WTC11 (cell line): ENCODE measurements at regions of chr10 and their contacts with region 1.

Region 1: DNA sequence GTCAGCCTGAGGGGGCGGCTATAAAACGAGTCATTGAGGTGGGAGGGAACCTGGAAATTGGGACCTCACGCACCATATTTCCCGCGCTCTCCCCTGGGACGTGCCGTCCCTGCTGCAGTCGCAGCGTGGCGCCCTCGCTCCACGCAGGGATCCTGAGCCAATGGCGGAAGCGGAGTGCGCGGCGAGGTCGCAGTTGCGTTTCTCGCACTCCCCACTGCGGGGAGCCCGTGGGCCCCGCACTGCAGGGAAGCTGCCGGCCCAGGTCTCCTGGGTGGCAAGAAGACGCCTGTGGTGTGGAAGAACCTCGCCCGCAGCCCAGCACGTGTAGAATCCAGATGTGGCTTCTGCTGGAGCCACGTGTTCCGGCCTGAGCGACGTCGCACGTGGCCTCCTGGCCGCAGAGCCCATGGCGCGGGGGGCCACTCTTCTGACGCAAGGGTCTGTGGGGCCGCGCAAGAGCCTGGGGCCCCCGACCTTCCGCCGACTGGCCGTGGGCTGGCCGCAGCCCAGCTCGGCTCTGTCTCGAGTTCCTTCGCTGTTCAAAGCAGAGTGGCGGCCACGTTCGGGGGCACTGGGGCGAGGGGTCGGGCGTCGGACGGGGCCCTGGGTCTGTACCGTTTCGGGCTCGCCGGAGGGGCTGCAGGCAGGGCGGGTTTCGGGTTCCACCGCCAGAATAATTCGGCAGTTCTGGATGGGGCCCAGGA is 26.4 kb downstream of the HIF1AN start:
- DNase-seq: peak; percentile 73
- ATAC-seq: peak; percentile 64
- H3K4me3 Mint-ChIP-seq: no peak overlapping the region
- H3K27ac Mint-ChIP-seq: no peak overlapping the region
- H3K4me1 Mint-ChIP-seq: peaks cover 9% of the 10 kb centered on the region; the same call in 1 of the 2 replicates
- H3K27me3 Mint-ChIP-seq: peaks cover 51% of the 10 kb centered on the region
- CTCF ChIP-seq: peak; percentile 67; the same call in 1 of the 2 replicates

Region 2: DNA sequence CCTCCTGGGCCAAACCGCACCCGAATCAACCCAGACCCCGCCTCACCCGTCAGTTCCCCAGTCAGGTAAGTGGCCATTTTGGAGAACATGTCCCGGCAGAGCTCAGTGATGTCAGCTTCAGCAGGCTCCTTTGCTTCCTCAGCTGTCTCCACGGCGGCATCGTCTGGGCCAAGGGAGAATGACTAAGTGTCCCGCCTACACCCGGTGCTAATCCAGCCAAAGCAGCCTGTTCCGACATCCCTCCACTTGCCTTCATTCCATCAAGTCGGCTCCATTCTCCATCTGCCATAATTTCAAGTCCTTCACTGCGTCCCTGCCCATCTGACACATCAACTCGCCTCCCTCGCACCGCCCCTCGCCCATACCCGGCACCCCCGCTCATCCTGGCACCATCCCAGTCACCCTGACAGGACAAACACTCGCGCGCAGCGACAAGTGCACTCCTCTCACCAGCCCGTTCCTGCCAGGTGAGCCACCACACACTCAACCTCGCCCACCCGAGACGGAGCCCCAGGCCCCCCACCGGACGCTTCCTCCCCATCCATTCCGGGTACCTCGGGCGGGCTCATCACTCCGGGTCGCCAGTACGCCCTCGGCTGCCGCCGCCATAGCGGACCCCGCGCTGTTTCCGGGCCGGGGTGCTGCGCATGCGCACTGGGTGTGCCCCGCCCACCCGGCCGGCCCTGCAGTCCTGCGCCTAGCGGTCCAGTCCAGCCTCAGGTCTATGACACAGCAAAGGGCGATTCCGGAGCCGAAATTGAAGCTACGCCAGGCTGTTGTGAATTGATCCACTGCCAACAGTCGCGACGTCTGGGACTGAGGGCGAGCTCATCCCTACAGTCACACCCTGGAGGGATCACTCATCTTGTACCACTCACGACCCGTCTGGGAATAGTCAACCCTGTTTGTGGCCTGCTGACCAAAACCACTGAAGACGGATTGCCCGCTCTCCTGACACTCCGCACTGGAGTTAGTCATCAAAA is 275.8 kb before region 1 on chr10 and contains the start of gene BLOC1S2:
- CTCF ChIA-PET with region 1: no interaction called
- POLR2A ChIA-PET with region 1: no interaction called
- DNase-seq: peak; percentile 85
- ATAC-seq: peak; percentile 91
- H3K4me3 Mint-ChIP-seq: peak within 1 kb of the TSS; percentile 99
- H3K27ac Mint-ChIP-seq: peak within 1 kb of the TSS; percentile 94
- H3K4me1 Mint-ChIP-seq: peaks cover 17% of the 10 kb centered on the region
- H3K27me3 Mint-ChIP-seq: peaks cover 5% of the 10 kb centered on the region
- CTCF ChIP-seq: no peak
- total RNA-seq, gene BLOC1S2: 47.6 to 54.1 TPM (median 52.4 TPM) in 3 replicates

Region 3: GRCh38 chr10:100498059-100498458 is 64.1 kb before region 1 on chr10:
- CTCF ChIA-PET with region 1: no interaction called
- POLR2A ChIA-PET with region 1: no interaction called
- DNase-seq: no peak
- ATAC-seq: no peak
- H3K4me3 Mint-ChIP-seq: no peak overlapping the region
- H3K27ac Mint-ChIP-seq: no peak overlapping the region
- H3K4me1 Mint-ChIP-seq: no peaks in the 10 kb centered on the region
- H3K27me3 Mint-ChIP-seq: peaks cover 98% of the 10 kb centered on the region
- CTCF ChIP-seq: no peak

Region 4: DNA sequence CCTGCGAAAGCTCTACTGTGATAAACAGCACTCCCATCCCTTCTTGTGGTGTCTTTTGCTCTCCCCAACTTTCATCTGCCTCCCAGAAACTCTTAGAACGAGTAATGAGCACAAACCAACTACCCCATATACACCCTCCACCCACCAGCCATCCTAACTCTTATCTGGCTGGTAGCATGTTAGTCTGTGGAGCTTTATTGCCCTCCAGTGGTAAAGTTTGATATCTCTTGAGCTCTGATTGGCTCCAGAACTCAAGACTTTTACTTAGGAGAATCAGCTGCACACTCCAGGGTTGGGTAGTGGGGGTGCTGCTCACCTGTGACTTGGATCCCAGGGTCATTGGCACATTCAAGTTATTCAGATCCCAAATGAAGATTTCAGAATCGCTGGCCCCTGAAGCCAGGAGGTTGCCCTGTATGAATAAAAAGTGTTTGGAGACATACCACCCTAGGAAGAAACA is 53.4 kb before region 1 on chr10:
- CTCF ChIA-PET with region 1: no interaction called
- POLR2A ChIA-PET with region 1: no interaction called
- DNase-seq: no peak
- ATAC-seq: peak; percentile 93
- H3K4me3 Mint-ChIP-seq: no peak overlapping the region
- H3K27ac Mint-ChIP-seq: no peak overlapping the region
- H3K4me1 Mint-ChIP-seq: peaks cover 6% of the 10 kb centered on the region; the same call in 1 of the 2 replicates
- H3K27me3 Mint-ChIP-seq: peaks cover 60% of the 10 kb centered on the region
- CTCF ChIP-seq: peak; percentile 47; the same call in 1 of the 2 replicates

Region 5: DNA sequence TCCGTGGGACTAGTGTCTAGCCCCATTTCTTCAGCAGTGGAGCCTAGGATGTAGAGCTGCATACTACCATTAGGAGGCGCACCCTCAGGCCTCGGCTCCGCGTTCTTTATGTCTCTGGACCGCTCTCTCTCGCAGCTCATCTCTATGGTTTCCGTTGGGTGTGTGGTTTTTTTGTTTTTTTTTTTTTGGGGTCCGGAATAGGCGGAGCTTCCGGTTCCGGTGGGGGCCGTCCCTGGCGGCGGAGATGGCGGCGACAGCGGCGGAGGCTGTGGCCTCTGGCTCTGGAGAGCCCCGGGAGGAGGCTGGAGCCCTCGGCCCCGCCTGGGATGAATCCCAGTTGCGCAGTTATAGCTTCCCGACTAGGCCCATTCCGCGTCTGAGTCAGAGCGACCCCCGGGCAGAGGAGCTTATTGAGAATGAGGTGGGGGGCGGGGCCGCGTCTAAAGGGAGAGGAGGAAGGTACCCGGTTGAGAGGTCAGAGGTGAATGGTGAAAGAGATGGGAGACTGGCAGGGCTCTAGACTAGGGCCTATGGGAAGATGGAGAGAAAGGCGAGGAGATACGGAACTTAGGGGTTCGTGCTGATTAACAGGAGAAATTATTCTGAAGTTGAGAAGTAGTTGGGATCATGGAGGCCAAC is 26.3 kb before region 1 on chr10 and contains the start of gene HIF1AN:
- CTCF ChIA-PET with region 1: interaction called, 20 read pairs
- POLR2A ChIA-PET with region 1: interaction called, 3 read pairs
- DNase-seq: peak; percentile 86
- ATAC-seq: peak; percentile 98
- H3K4me3 Mint-ChIP-seq: no peak within 1 kb of the TSS
- H3K27ac Mint-ChIP-seq: peak within 1 kb of the TSS; percentile 73
- H3K4me1 Mint-ChIP-seq: peaks cover 7% of the 10 kb centered on the region; the same call in 1 of the 2 replicates
- H3K27me3 Mint-ChIP-seq: no peaks in the 10 kb centered on the region
- CTCF ChIP-seq: peak; percentile 69
- total RNA-seq, gene HIF1AN: 49.9 to 58.3 TPM (median 53.9 TPM) in 3 replicates

Region 6: GRCh38 chr10:100637785-100638184 is 75.6 kb after region 1 on chr10:
- CTCF ChIA-PET with region 1: interaction called, 13 read pairs
- POLR2A ChIA-PET with region 1: no interaction called
- DNase-seq: peak; percentile 87
- ATAC-seq: peak; percentile 88
- H3K4me3 Mint-ChIP-seq: peak overlapping the region; percentile 29
- H3K27ac Mint-ChIP-seq: no peak overlapping the region
- H3K4me1 Mint-ChIP-seq: peaks cover 35% of the 10 kb centered on the region
- H3K27me3 Mint-ChIP-seq: peaks cover 14% of the 10 kb centered on the region
- CTCF ChIP-seq: peak; percentile 76

Region 7: DNA sequence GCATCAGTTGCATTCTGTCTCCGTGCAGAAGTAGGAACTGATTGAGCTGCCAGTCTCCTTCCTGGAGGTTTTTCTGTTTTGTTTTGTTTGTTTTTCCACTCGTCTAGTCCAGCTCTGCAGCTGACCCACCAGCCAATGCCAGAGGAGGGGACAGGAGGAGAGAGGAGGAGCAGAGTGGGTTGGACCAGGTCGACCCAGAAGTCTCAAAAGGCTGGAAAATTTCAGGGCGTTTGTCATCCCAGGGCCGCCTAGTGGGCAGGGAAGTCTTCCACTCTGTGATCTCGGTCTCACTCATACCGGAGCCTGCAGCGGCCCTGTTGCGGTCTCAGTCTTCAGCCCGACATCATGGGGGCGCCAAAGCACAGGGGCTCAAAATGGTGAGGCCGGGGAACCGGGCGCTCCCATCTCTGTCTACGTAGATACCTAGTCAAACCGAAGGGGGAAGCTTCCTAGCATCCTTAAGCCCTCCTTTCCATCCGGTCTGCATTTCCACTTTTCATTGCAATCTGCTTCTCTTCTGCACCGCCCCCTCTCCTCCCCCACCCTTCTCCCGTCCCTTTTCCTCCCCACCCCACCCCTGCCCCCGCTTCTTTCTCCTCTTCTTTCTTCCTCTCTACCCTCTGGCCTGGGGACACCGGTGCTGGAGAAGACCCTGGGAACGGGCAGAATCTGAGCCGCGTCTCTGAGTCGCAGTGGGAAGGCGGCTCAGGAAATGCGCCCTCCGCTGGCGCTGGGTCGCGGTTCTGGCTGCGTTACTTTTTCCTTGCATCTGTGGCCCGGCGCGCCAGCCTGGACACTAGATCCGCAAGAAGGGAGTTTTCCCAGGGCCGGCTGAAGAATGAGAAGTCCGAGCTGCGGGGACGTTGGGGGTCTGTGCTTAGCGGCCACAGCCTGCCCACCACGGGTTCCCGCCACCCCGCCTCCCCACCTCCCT is 167.0 kb after region 1 on chr10:
- CTCF ChIA-PET with region 1: interaction called, 19 read pairs
- POLR2A ChIA-PET with region 1: no interaction called
- DNase-seq: peak; percentile 80
- ATAC-seq: peak; percentile 61
- H3K4me3 Mint-ChIP-seq: peak overlapping the region; percentile 53
- H3K27ac Mint-ChIP-seq: no peak overlapping the region
- H3K4me1 Mint-ChIP-seq: peaks cover 40% of the 10 kb centered on the region
- H3K27me3 Mint-ChIP-seq: peaks cover 100% of the 10 kb centered on the region
- CTCF ChIP-seq: peak; percentile 23; the same call in 1 of the 2 replicates

Region 8: GRCh38 chr10:100743626-100744135 is 181.5 kb after region 1 on chr10:
- CTCF ChIA-PET with region 1: interaction called, 113 read pairs
- POLR2A ChIA-PET with region 1: interaction called, 6 read pairs
- DNase-seq: peak; percentile 57
- ATAC-seq: peak; percentile 3; the same call in 1 of the 2 replicates
- H3K4me3 Mint-ChIP-seq: peak overlapping the region; percentile 52
- H3K27ac Mint-ChIP-seq: no peak overlapping the region
- H3K4me1 Mint-ChIP-seq: peaks cover 65% of the 10 kb centered on the region
- H3K27me3 Mint-ChIP-seq: peaks cover 96% of the 10 kb centered on the region
- CTCF ChIP-seq: peak; percentile 58; the same call in 1 of the 2 replicates

Region 9: DNA sequence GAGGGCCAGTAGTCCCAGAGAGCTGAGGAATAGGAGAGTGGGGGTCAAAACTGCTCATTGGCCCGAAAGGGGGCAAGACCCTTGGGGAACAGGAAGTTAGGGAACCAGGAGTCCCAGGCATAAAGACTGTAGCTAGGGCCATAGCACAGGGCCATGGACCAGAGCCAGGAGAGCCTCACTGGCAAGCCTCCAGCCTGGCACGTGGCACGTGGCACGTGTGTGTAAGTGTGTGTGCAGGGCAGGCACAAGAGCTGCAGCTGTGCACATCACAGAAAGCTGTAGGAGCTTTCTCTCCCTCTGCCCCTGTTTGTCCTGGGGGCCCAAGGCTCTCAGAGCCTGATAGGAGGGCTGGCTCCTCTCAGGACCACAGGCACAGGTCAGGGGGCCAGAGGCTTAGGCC is 302.8 kb after region 1 on chr10:
- CTCF ChIA-PET with region 1: interaction called, 19 read pairs
- POLR2A ChIA-PET with region 1: no interaction called
- DNase-seq: no peak
- ATAC-seq: no peak
- H3K4me3 Mint-ChIP-seq: no peak overlapping the region
- H3K27ac Mint-ChIP-seq: no peak overlapping the region
- H3K4me1 Mint-ChIP-seq: peaks cover 12% of the 10 kb centered on the region
- H3K27me3 Mint-ChIP-seq: peaks cover 69% of the 10 kb centered on the region
- CTCF ChIP-seq: no peak